ENCODE measurements at regions of chr13 and their contacts with region 1.

Region 1: GRCh38 chr13:77329133-77329910 is 2.4 kb upstream of the MYCBP2 start:
- DNase-seq: peak; percentile 89 to 95 (median 93)
- H3K4me3 ChIP-seq: peak overlapping the region; percentile 73 to 78
- H3K4me3 Mint-ChIP-seq: peak overlapping the region; percentile 89 to 100 (median 96)
- H3K27ac ChIP-seq: peak overlapping the region; percentile 62
- H3K27ac Mint-ChIP-seq: peak overlapping the region; percentile 84 to 99 (median 93)
- H3K4me1 ChIP-seq: peaks cover 40% of the 10 kb centered on the region
- H3K4me1 Mint-ChIP-seq: peaks cover 19 to 57% (median 37%) of the 10 kb centered on the region in 4 donors
- H3K27me3 ChIP-seq: no peaks in the 10 kb centered on the region
- H3K27me3 Mint-ChIP-seq: no peaks in the 10 kb centered on the region

Region 2: GRCh38 chr13:75635828-75636435 is 1693.4 kb before region 1 on chr13 and contains the start of gene LMO7:
- CTCF ChIA-PET with region 1: no interaction called
- POLR2A ChIA-PET with region 1: no interaction called
- intact Hi-C with region 1: loop called (anchors 5 kb)
- DNase-seq: peak; percentile 51 to 65 (median 55)
- H3K4me3 ChIP-seq: peak within 1 kb of the TSS; percentile 59 to 70
- H3K4me3 Mint-ChIP-seq: peak within 1 kb of the TSS; percentile 82 to 90 (median 86)
- H3K27ac ChIP-seq: peak within 1 kb of the TSS; percentile 31
- H3K27ac Mint-ChIP-seq: peak within 1 kb of the TSS; percentile 47 to 88 (median 74)
- H3K4me1 ChIP-seq: peaks cover 6% of the 10 kb centered on the region
- H3K4me1 Mint-ChIP-seq: peaks cover 12 to 19% (median 14%) of the 10 kb centered on the region in 4 donors
- H3K27me3 ChIP-seq: no peaks in the 10 kb centered on the region
- H3K27me3 Mint-ChIP-seq: peaks cover 0 to 4% of the 10 kb centered on the region in 2 donors
- total RNA-seq, gene LMO7: 25.7 to 29.4 TPM

Region 3: DNA sequence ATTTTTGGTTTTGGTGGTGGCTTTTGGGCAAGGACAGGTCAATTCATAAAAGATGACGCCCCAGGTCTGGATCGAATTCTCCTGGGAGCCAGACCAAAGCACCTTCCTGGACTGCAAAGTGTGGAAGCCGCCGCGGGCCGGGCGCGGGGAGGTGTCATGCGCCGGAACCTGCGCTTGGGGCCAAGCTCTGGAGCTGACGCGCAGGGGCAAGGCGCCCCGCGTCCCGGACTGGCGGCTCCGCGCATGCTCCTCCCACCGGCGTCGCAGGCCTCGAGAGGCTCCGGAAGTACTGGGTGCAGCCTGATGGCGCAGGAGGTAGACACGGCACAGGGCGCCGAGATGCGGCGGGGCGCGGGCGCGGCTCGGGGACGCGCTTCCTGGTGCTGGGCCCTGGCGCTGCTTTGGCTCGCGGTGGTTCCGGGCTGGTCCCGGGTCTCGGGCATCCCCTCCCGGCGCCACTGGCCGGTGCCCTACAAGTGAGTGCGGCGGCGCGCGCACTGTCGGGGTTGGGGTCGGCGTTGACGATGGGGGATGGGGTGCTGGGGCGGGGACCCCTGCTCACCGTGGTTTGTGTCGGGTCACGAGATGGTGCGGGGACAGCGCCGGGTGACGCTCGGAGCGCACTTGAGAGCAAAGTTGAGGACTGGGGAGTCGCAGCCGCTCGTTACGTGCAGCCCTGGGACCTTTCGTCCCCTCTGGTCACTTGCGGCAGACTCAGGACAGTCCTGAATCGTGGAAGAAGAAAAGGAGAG is 337.4 kb before region 1 on chr13 and contains the start of gene CLN5:
- CTCF ChIA-PET with region 1: no interaction called
- POLR2A ChIA-PET with region 1: interaction called, 15 read pairs
- intact Hi-C with region 1: loop called (anchors 1 kb)
- DNase-seq: peak; percentile 95 to 98 (median 97)
- H3K4me3 ChIP-seq: peak within 1 kb of the TSS; percentile 88 to 93
- H3K4me3 Mint-ChIP-seq: peak within 1 kb of the TSS; percentile 92 to 99 (median 96)
- H3K27ac ChIP-seq: peak within 1 kb of the TSS; percentile 95
- H3K27ac Mint-ChIP-seq: peak within 1 kb of the TSS; percentile 98 to 100 (median 100)
- H3K4me1 ChIP-seq: peaks cover 37% of the 10 kb centered on the region
- H3K4me1 Mint-ChIP-seq: peaks cover 26 to 52% (median 41%) of the 10 kb centered on the region in 4 donors
- H3K27me3 ChIP-seq: no peaks in the 10 kb centered on the region
- H3K27me3 Mint-ChIP-seq: peaks cover 3 to 7% of the 10 kb centered on the region in 2 donors
- total RNA-seq, gene CLN5: 41.5 to 48.6 TPM

Region 4: DNA sequence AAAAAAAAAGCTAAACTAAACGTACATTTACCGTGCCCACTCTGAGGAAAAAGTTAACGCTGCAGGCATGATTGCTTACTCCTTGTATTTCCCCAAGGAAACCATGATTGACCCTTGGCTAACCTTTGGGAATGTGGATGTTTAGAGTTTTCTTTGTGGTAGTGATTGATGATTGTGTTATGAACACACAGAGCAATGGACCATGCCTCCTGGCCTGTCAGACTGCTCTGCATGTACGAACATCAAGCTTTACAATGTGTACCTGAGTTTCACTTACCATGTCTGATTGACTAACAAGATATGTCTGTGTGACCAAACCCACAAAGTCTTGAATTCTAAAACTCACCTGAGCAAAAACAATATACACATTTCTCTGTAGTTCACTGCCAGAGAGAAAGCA is 37.5 kb before region 1 on chr13:
- CTCF ChIA-PET with region 1: interaction called, 3 read pairs
- POLR2A ChIA-PET with region 1: interaction called, 11 read pairs
- intact Hi-C with region 1: loop called (anchors 5 kb)
- DNase-seq: no peak
- H3K4me3 ChIP-seq: no peak overlapping the region
- H3K4me3 Mint-ChIP-seq: no peak overlapping the region
- H3K27ac ChIP-seq: no peak overlapping the region
- H3K27ac Mint-ChIP-seq: no peak overlapping the region
- H3K4me1 ChIP-seq: peaks cover 11% of the 10 kb centered on the region
- H3K4me1 Mint-ChIP-seq: peaks cover 23 to 49% (median 41%) of the 10 kb centered on the region in 4 donors
- H3K27me3 ChIP-seq: no peaks in the 10 kb centered on the region
- H3K27me3 Mint-ChIP-seq: no peaks in the 10 kb centered on the region

Region 5: GRCh38 chr13:77318741-77319140 is 10.6 kb before region 1 on chr13:
- CTCF ChIA-PET with region 1: interaction called, 6 read pairs
- POLR2A ChIA-PET with region 1: interaction called, 17 read pairs
- intact Hi-C with region 1: no loop called
- DNase-seq: no peak
- H3K4me3 ChIP-seq: no peak overlapping the region
- H3K4me3 Mint-ChIP-seq: peak overlapping the region in 6 of 8 donors; percentile 1 to 67 (median 34)
- H3K27ac ChIP-seq: no peak overlapping the region
- H3K27ac Mint-ChIP-seq: peak overlapping the region in 6 of 7 donors; percentile 5 to 80 (median 51)
- H3K4me1 ChIP-seq: peaks cover 96% of the 10 kb centered on the region
- H3K4me1 Mint-ChIP-seq: peaks cover 76 to 98% (median 88%) of the 10 kb centered on the region in 4 donors
- H3K27me3 ChIP-seq: no peaks in the 10 kb centered on the region
- H3K27me3 Mint-ChIP-seq: no peaks in the 10 kb centered on the region

Region 6: GRCh38 chr13:77480066-77480465 is 150.7 kb after region 1 on chr13:
- CTCF ChIA-PET with region 1: interaction called, 65 read pairs
- POLR2A ChIA-PET with region 1: interaction called, 30 read pairs
- intact Hi-C with region 1: loop called (anchors 1 kb)
- DNase-seq: no peak
- H3K4me3 ChIP-seq: no peak overlapping the region
- H3K4me3 Mint-ChIP-seq: no peak overlapping the region
- H3K27ac ChIP-seq: no peak overlapping the region
- H3K27ac Mint-ChIP-seq: no peak overlapping the region
- H3K4me1 ChIP-seq: peaks cover 8% of the 10 kb centered on the region
- H3K4me1 Mint-ChIP-seq: peaks cover 8 to 11% (median 10%) of the 10 kb centered on the region in 4 donors
- H3K27me3 ChIP-seq: no peaks in the 10 kb centered on the region
- H3K27me3 Mint-ChIP-seq: no peaks in the 10 kb centered on the region